ENCODE measurements at regions of chr15 and their contacts with region 1.

Region 1: GRCh38 chr15:48084759-48085590 is 35.8 kb upstream of the SLC24A5 start:
- DNase-seq: peak in 1 of 2 experiments; percentile 13
- H3K4me3 ChIP-seq: no peak overlapping the region
- H3K27ac ChIP-seq: no peak overlapping the region
- H3K4me1 ChIP-seq: no peaks in the 10 kb centered on the region
- H3K27me3 ChIP-seq: no peaks in the 10 kb centered on the region
- CTCF ChIP-seq: peak; percentile 28 to 80 (median 72)
- EP300 ChIP-seq: no peak
- POLR2A ChIP-seq: no peak
- RAD21 ChIP-seq: peak; percentile 82 to 89

Region 2: DNA sequence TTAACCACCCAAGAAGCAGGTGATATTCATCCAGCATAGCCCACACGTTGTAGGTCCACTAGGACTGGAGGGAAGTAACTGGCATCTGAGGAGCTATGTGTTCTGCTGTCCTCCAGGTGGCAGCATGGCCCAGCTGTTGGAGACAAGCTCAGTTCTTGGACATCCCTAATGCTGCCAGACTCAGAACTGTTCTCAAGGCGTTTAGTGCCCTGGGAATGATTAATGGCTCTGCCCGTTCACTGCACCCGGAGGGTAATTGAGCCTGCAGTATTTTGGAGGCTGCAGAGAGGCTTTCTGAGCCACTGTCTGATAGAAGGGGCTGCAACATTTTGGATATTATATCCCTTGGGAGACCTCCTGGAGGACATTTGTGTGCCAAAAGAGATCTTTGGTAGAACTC is 888.9 kb before region 1 on chr15:
- CTCF ChIA-PET with region 1: interaction called, 20 read pairs
- POLR2A ChIA-PET with region 1: no interaction called
- DNase-seq: peak; percentile 80 to 82
- H3K4me3 ChIP-seq: peak overlapping the region in 1 of 4 experiments; percentile 10; a peak in 1 of 8 replicates
- H3K27ac ChIP-seq: no peak overlapping the region
- H3K4me1 ChIP-seq: peaks cover 0 to 9% (median 1%) of the 10 kb centered on the region in 4 experiments; a peak in 3 of 7 replicates
- H3K27me3 ChIP-seq: no peaks in the 10 kb centered on the region; a peak in 2 of 7 replicates
- CTCF ChIP-seq: peak; percentile 93 to 96 (median 96)
- EP300 ChIP-seq: no peak
- POLR2A ChIP-seq: no peak
- RAD21 ChIP-seq: peak; percentile 99 to 100

Region 3: GRCh38 chr15:47908950-47909670 is 175.9 kb before region 1 on chr15:
- CTCF ChIA-PET with region 1: interaction called, 23 read pairs
- POLR2A ChIA-PET with region 1: no interaction called
- DNase-seq: no peak
- H3K4me3 ChIP-seq: no peak overlapping the region
- H3K27ac ChIP-seq: no peak overlapping the region
- H3K4me1 ChIP-seq: no peaks in the 10 kb centered on the region
- H3K27me3 ChIP-seq: no peaks in the 10 kb centered on the region
- CTCF ChIP-seq: no peak
- EP300 ChIP-seq: no peak
- POLR2A ChIP-seq: no peak
- RAD21 ChIP-seq: no peak

Region 4: DNA sequence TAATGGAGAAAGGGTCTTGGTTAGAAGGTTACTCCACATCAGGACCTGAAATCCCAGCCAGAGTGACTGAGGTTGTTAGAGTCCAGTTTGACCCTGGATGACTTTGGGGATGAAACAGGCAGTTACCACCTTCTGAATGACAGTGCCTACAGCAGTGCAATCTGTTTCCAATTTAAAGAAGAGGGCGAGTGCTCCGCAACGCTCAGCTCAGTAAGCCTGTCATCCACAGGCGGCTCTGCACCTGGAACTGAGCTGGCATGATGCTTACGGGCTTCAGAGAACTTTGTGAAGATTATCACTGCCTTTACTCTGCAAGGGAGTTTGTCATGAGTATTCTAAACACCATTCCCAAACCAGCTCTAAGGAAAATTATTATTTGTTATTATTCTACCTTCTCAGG is 91.9 kb before region 1 on chr15:
- CTCF ChIA-PET with region 1: interaction called, 44 read pairs
- POLR2A ChIA-PET with region 1: no interaction called
- DNase-seq: no peak
- H3K4me3 ChIP-seq: no peak overlapping the region
- H3K27ac ChIP-seq: no peak overlapping the region
- H3K4me1 ChIP-seq: no peaks in the 10 kb centered on the region
- H3K27me3 ChIP-seq: no peaks in the 10 kb centered on the region
- CTCF ChIP-seq: no peak
- EP300 ChIP-seq: no peak
- POLR2A ChIP-seq: no peak
- RAD21 ChIP-seq: no peak

Region 5: DNA sequence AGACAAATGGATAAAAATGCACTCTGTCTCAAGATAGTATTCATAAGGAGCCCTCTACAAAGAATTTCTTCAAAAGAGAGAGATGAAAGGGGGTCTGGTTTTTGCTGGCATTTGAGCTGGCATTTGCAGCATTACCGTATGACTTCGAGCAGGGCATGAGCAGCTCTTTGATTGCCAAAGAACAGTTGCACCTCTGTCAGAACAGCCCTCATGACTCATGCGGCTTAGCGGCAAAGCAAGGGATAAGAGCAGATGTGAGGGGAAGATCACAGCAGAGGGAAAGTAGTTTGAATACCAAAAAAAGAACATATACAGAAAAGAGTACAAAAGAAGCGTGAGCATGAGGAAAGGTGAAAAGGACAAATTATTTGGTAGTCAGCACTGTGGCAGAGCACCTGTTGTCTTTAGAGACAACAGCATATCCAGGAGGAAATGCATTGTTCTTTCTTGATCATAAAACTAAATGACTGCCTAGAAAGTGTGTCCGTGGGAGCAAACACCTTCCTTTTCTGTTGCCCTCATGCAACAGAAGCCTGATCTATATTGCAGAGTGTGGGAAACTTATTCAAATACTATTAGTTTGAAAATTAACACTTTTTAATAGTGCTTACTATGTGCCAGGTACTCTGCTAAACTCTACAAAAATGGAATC is 44.7 kb before region 1 on chr15:
- CTCF ChIA-PET with region 1: interaction called, 10 read pairs
- POLR2A ChIA-PET with region 1: no interaction called
- DNase-seq: no peak
- H3K4me3 ChIP-seq: no peak overlapping the region
- H3K27ac ChIP-seq: no peak overlapping the region
- H3K4me1 ChIP-seq: 0 out of 7 replicates have a peak, but pooled peaks cover 0 to 4% (median 0%) of the 10 kb centered on the region in 4 experiments
- H3K27me3 ChIP-seq: no peaks in the 10 kb centered on the region; a peak in 1 of 7 replicates
- CTCF ChIP-seq: no peak
- EP300 ChIP-seq: no peak
- POLR2A ChIP-seq: no peak
- RAD21 ChIP-seq: no peak

Region 6: DNA sequence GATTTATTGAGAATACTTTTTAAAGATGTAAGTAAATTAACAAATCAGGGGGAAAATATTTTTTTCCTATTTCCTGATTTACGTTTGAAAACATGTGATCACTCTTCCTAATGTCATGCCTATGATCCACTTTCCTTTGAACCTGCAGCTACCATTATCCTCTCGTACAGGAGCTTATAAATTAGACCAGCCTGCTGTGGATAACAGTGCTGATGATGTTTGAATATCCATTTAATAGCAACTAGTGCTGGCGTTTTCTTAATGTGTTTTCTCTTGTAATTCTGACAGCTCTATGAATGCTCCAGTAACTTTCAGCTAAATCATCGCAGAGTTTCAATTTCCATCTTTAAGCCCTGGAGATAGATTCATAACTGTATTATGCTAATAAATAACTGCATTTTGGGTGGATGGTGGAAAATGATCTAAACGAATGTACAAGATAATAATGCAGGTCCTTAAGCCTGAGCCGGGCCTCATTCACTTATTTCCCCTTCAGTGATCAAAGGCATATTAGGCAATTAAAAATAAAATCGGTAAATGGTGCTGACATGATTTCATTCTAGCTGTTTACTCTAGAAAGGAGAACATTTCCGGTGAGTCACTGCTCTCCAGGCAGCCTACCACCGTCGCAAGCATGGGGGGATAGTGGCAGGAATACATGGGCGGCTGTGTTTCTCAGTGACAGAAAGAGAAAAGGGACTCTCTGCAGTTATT is 22.7 kb before region 1 on chr15:
- CTCF ChIA-PET with region 1: interaction called, 12 read pairs
- POLR2A ChIA-PET with region 1: no interaction called
- DNase-seq: no peak
- H3K4me3 ChIP-seq: no peak overlapping the region
- H3K27ac ChIP-seq: no peak overlapping the region
- H3K4me1 ChIP-seq: no peaks in the 10 kb centered on the region; a peak in 1 of 7 replicates
- H3K27me3 ChIP-seq: no peaks in the 10 kb centered on the region
- CTCF ChIP-seq: no peak
- EP300 ChIP-seq: no peak
- POLR2A ChIP-seq: no peak
- RAD21 ChIP-seq: no peak

Region 7: GRCh38 chr15:48073881-48074280 is 11.1 kb before region 1 on chr15:
- CTCF ChIA-PET with region 1: interaction called, 21 read pairs
- POLR2A ChIA-PET with region 1: no interaction called
- DNase-seq: no peak
- H3K4me3 ChIP-seq: no peak overlapping the region
- H3K27ac ChIP-seq: no peak overlapping the region
- H3K4me1 ChIP-seq: no peaks in the 10 kb centered on the region
- H3K27me3 ChIP-seq: no peaks in the 10 kb centered on the region
- CTCF ChIP-seq: no peak
- EP300 ChIP-seq: no peak
- POLR2A ChIP-seq: no peak
- RAD21 ChIP-seq: no peak

Measured in H1 (cell line).